ENCODE measurements at regions of chr15 and their contacts with region 1.

Region 1: GRCh38 chr15:76190834-76191538 is 120.3 kb downstream of the ETFA start:
- DNase-seq: peak; percentile 73 to 81
- ATAC-seq: peak; percentile 75 to 91 (median 84)
- H3K4me3 ChIP-seq: peak overlapping the region in 1 of 10 donors; percentile 5
- H3K27ac ChIP-seq: no peak overlapping the region
- H3K4me1 ChIP-seq: peaks cover 0 to 23% (median 16%) of the 10 kb centered on the region in 9 donors
- H3K27me3 ChIP-seq: peaks cover 0 to 46% (median 34%) of the 10 kb centered on the region in 7 donors
- CTCF ChIP-seq: peak; percentile 53 to 93 (median 87)

Region 2: GRCh38 chr15:76127880-76128279 is 63.1 kb before region 1 on chr15:
- intact Hi-C with region 1: no loop called
- DNase-seq: no peak
- ATAC-seq: no peak
- H3K4me3 ChIP-seq: no peak overlapping the region
- H3K27ac ChIP-seq: no peak overlapping the region
- H3K4me1 ChIP-seq: no peaks in the 10 kb centered on the region
- H3K27me3 ChIP-seq: peaks cover 0 to 75% (median 22%) of the 10 kb centered on the region in 7 donors
- CTCF ChIP-seq: no peak

Region 3: GRCh38 chr15:76217029-76217428 is 26.0 kb after region 1 on chr15:
- intact Hi-C with region 1: no loop called
- DNase-seq: no peak
- ATAC-seq: no peak
- H3K4me3 ChIP-seq: no peak overlapping the region
- H3K27ac ChIP-seq: no peak overlapping the region
- H3K4me1 ChIP-seq: peaks cover 0 to 8% (median 5%) of the 10 kb centered on the region in 9 donors
- H3K27me3 ChIP-seq: no peaks in the 10 kb centered on the region
- CTCF ChIP-seq: no peak

Region 4: DNA sequence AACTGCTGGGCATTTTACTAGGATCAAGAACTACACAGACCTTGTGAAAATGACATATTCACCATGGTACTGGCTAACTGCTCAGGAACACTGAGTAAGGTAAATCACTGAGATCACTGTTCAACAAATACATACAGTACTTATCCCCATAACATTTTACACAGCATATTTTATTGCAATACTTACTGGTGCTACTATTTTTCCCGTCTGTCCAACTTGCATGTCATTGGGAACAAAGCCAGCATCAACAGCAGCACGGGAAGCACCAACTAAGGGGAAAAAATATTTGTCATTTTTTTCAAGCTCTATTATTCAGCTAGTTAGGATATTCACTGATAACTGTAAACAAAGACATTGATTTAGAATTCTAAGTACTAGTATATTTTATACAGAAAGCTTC is 83.2 kb after region 1 on chr15:
- intact Hi-C with region 1: loop called in 2 of 10 experiments (anchors 10 kb)
- DNase-seq: no peak
- ATAC-seq: no peak
- H3K4me3 ChIP-seq: no peak overlapping the region
- H3K27ac ChIP-seq: no peak overlapping the region
- H3K4me1 ChIP-seq: peaks cover 0 to 4% (median 0%) of the 10 kb centered on the region in 9 donors
- H3K27me3 ChIP-seq: no peaks in the 10 kb centered on the region
- CTCF ChIP-seq: no peak

Region 5: GRCh38 chr15:76330080-76330680 is 139.2 kb after region 1 on chr15:
- intact Hi-C with region 1: loop called in 9 of 10 experiments (anchors 2 to 5 kb)
- DNase-seq: peak; percentile 38 to 56
- ATAC-seq: peak in 7 of 8 donors; percentile 60 to 77 (median 71)
- H3K4me3 ChIP-seq: no peak overlapping the region
- H3K27ac ChIP-seq: no peak overlapping the region
- H3K4me1 ChIP-seq: peaks cover 0 to 19% (median 5%) of the 10 kb centered on the region in 9 donors
- H3K27me3 ChIP-seq: peaks cover 8 to 78% (median 37%) of the 10 kb centered on the region in 7 donors
- CTCF ChIP-seq: peak; percentile 34 to 71 (median 64)

Region 6: DNA sequence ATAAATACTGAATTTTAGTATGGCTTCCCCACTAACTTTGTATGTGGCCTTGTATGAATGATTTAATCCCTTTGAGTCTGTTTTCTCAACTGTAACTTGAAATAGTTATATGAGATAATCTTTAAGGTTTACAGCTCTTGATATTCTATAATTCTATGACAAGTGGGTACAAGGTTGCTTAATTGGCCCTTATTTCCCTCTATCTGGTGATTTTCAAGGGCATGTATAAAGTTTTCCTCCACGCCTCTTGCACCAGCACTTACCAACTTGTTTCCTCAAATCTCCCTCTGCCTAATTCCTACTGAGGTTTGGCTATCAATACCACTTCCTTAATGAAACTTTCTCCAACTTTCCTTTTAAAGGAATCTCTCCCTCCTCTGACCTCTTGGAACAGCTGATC is 258.5 kb after region 1 on chr15:
- intact Hi-C with region 1: no loop called
- DNase-seq: no peak
- ATAC-seq: no peak
- H3K4me3 ChIP-seq: no peak overlapping the region
- H3K27ac ChIP-seq: no peak overlapping the region
- H3K4me1 ChIP-seq: no peaks in the 10 kb centered on the region
- H3K27me3 ChIP-seq: no peaks in the 10 kb centered on the region
- CTCF ChIP-seq: no peak

Region 7: GRCh38 chr15:76866716-76867321 is 675.8 kb after region 1 on chr15:
- intact Hi-C with region 1: loop called in 5 of 10 experiments (anchors 5 to 10 kb)
- DNase-seq: peak in 1 of 2 donors; percentile 9
- ATAC-seq: peak in 6 of 8 donors; percentile 40 to 80 (median 72)
- H3K4me3 ChIP-seq: no peak overlapping the region
- H3K27ac ChIP-seq: peak overlapping the region in 2 of 10 donors; percentile 13 to 14
- H3K4me1 ChIP-seq: peaks cover 0 to 48% (median 23%) of the 10 kb centered on the region in 9 donors
- H3K27me3 ChIP-seq: no peaks in the 10 kb centered on the region
- CTCF ChIP-seq: peak in 8 of 9 donors; percentile 8 to 64 (median 54)